ENCODE measurements at regions of chr1 and their contacts with region 1.

Region 1: GRCh38 chr1:219373616-219373935 is 199.9 kb downstream of the LYPLAL1 start:
- DNase-seq: no peak
- H3K4me3 ChIP-seq: no peak overlapping the region
- H3K27ac ChIP-seq: no peak overlapping the region
- H3K27me3 ChIP-seq: no peaks in the 10 kb centered on the region
- CTCF ChIP-seq: no peak

Region 2: GRCh38 chr1:219099307-219099706 is 274.3 kb before region 1 on chr1:
- CTCF ChIA-PET with region 1: no interaction called
- POLR2A ChIA-PET with region 1: no interaction called
- DNase-seq: no peak
- H3K4me3 ChIP-seq: no peak overlapping the region
- H3K27ac ChIP-seq: no peak overlapping the region
- H3K27me3 ChIP-seq: no peaks in the 10 kb centered on the region
- CTCF ChIP-seq: no peak

Region 3: GRCh38 chr1:219385786-219386427 is 12.3 kb after region 1 on chr1:
- CTCF ChIA-PET with region 1: interaction called, 11 read pairs
- POLR2A ChIA-PET with region 1: no interaction called
- DNase-seq: no peak
- H3K4me3 ChIP-seq: no peak overlapping the region
- H3K27ac ChIP-seq: no peak overlapping the region
- H3K27me3 ChIP-seq: no peaks in the 10 kb centered on the region
- CTCF ChIP-seq: peak; percentile 83